Activated CD4-positive, alpha-beta T cell treated with anti-CD3 and anti-CD28 coated beads for 36 hours (primary cell): ENCODE measurements at regions of chr11 and their contacts with region 1.

Region 1: DNA sequence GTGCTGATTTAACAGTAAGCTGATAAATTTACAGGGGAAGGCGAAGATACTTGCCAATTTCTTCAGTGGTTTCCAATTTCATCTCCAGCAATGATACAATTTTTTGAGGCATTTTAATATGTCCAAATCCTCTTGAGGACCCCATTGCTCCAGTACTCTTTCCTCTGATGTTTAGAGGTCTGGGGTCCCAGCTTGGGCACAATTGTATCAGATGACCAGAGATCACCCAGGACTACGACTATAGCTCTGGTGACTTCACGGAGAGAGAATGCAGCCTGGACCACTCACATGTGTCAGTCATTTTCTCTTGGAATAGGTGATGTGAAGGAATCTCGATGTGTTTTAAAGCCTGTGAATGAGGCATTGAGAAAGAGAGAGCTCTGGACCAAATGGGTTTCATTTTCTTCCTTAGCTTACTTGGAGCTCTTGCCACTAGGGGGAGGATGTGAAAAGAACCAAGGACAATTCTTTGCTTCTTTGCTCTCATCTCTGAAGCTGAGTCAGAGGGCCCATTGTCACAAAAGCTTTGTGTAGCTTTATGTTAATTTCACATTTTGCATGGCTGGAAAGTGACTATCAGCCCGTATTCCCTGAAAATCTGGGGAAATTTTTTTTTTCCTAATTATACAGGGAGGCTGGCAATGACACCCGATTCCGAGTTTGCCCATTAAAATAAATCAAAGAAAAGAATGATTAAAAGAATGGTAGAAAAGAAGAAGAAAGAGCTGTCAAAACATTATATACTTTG is 6.7 kb upstream of the CCDC90B start:
- DNase-seq: peak; percentile 50
- ATAC-seq: peak; percentile 98
- H3K4me3 Mint-ChIP-seq: peak overlapping the region; percentile 52
- H3K27ac Mint-ChIP-seq: peak overlapping the region; percentile 56
- H3K4me1 Mint-ChIP-seq: peaks cover 10% of the 10 kb centered on the region
- H3K27me3 Mint-ChIP-seq: peaks cover 7% of the 10 kb centered on the region

Region 2: DNA sequence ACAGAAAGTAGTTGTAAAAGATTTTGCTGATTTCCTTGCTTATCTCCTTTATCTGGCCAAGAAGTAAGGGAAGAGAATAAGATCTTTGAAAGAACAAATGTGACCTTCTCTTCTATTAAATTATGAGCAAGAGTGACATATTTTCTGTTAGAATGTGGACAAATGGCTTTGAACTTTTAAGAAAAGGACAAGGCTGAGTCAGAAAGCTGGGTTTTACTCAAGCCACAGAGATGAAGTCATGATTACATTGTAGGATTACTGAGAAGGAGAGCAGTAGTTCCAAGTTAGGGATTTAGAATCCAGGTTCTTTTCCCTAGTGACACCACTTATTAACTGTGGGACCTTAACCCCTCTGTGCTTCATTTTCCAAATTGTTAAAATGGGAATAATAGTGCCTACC is 20.3 kb before region 1 on chr11:
- CTCF ChIA-PET with region 1: interaction called, 37 read pairs
- POLR2A ChIA-PET with region 1: no interaction called
- intact Hi-C with region 1: no loop called
- DNase-seq: no peak
- ATAC-seq: peak; percentile 64
- H3K4me3 Mint-ChIP-seq: no peak overlapping the region
- H3K27ac Mint-ChIP-seq: no peak overlapping the region
- H3K4me1 Mint-ChIP-seq: peaks cover 15% of the 10 kb centered on the region
- H3K27me3 Mint-ChIP-seq: no peaks in the 10 kb centered on the region

Region 3: GRCh38 chr11:83278351-83278750 is 14.5 kb before region 1 on chr11:
- CTCF ChIA-PET with region 1: interaction called, 37 read pairs
- POLR2A ChIA-PET with region 1: no interaction called
- intact Hi-C with region 1: no loop called
- DNase-seq: no peak
- ATAC-seq: no peak
- H3K4me3 Mint-ChIP-seq: no peak overlapping the region
- H3K27ac Mint-ChIP-seq: no peak overlapping the region
- H3K4me1 Mint-ChIP-seq: peaks cover 17% of the 10 kb centered on the region
- H3K27me3 Mint-ChIP-seq: no peaks in the 10 kb centered on the region

Region 4: DNA sequence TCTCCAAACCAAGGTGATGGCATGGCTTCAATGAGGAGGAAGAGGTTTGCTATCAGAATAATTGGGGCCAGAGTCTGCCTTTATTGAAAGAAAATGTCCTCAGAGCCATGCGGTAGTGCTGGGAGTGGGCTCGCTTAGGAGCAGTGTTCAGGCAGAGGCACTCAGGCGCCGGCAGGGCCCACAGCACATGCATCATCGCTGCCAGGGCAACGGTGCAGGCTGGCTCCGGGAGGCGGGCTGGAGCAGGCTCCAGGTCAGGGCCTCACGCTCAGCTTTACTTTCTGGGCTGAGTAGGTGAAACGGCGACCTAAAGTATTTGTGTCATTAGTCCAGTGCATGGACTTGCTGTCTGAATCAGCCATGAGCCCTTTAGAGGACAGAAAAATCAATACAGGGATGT is 163.2 kb after region 1 on chr11:
- CTCF ChIA-PET with region 1: no interaction called
- POLR2A ChIA-PET with region 1: no interaction called
- intact Hi-C with region 1: no loop called
- DNase-seq: no peak
- ATAC-seq: no peak
- H3K4me3 Mint-ChIP-seq: no peak overlapping the region
- H3K27ac Mint-ChIP-seq: no peak overlapping the region
- H3K4me1 Mint-ChIP-seq: no peaks in the 10 kb centered on the region
- H3K27me3 Mint-ChIP-seq: no peaks in the 10 kb centered on the region

Region 5: GRCh38 chr11:83724008-83724461 is 431.2 kb after region 1 on chr11:
- CTCF ChIA-PET with region 1: interaction called, 9 read pairs
- POLR2A ChIA-PET with region 1: no interaction called
- intact Hi-C with region 1: loop called (anchors 1 to 5 kb)
- DNase-seq: peak; percentile 33
- ATAC-seq: peak; percentile 60
- H3K4me3 Mint-ChIP-seq: no peak overlapping the region
- H3K27ac Mint-ChIP-seq: no peak overlapping the region
- H3K4me1 Mint-ChIP-seq: peaks cover 4% of the 10 kb centered on the region
- H3K27me3 Mint-ChIP-seq: peaks cover 12% of the 10 kb centered on the region

Region 6: DNA sequence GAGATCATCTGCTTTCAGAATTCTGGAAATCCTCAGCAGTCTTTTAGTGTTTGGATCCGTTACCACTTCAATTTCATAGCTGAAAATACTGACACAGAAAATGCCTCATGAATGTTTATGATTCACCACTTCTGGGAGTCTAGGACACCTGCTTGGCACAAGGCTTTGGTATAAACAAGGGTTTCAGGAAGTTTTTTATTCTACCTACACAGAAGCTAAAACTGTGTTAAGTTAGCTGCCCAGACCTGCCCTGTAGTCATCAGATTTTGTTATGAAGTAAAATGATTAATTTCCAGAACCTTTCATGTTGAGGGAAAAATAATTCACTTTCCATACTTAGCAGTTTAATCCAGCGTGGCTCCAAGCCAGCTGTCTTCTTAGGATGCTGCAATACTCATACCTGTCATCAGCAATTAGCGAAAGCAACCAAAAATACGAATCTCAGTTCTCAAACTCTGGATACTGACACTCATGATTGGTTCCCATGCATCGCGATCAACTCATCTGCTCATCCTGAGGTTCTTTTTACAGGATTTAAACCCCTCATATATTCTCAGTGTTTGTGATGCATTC is 451.8 kb after region 1 on chr11:
- CTCF ChIA-PET with region 1: no interaction called
- POLR2A ChIA-PET with region 1: no interaction called
- intact Hi-C with region 1: no loop called
- DNase-seq: no peak
- ATAC-seq: no peak
- H3K4me3 Mint-ChIP-seq: no peak overlapping the region
- H3K27ac Mint-ChIP-seq: no peak overlapping the region
- H3K4me1 Mint-ChIP-seq: no peaks in the 10 kb centered on the region
- H3K27me3 Mint-ChIP-seq: peaks cover 3% of the 10 kb centered on the region